GM18951 (cell line): ENCODE measurements at regions of chr9 and their contacts with region 1.

Region 1: GRCh38 chr9:21789541-21790037 is 12.8 kb upstream of the MTAP start:
- POLR2A ChIP-seq: no peak

Region 2: DNA sequence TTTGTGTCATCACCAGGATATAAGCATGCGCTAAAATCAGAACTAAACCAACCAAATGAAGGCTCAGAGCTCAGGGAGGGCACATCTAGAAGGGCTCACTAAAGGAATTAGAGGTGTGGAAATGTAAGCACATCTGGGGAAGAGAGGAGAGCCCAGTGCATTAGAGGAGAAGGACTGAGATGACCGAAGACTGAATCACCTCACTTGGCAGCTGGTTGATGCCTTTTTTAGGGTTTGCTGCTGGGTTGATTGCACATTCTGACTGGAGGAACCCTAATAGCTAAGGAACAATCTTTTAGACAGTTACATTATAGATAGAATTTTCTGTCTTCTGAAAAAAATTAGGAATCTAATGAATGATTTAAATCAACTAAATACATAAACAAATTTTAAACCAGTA is 614.9 kb before region 1 on chr9:
- in situ Hi-C with region 1: loop called (anchors 25 kb)
- POLR2A ChIP-seq: no peak

Region 3: GRCh38 chr9:21317956-21318923 is 471.3 kb before region 1 on chr9:
- in situ Hi-C with region 1: loop called (anchors 25 kb)
- POLR2A ChIP-seq: no peak

Region 4: DNA sequence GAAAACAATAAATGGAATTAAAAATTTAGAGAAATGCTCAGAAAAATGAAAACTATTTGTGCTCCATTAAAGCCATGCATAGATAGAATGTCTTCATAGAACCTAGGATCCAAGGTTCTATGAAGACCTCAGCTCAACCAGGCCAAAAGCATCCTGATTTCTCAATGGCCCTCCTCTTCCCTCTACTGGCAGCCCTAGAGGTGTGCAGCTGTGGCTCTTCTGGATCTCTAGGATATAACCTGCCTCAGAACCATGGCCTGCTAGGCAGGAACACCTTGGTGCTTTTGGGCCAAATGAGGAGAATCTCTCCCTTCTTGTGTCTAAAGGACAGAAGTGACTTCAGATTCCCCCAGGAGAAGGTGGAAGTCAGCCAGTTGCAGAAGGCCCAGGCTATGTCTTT is 334.3 kb before region 1 on chr9:
- in situ Hi-C with region 1: loop called (anchors 25 kb)
- POLR2A ChIP-seq: no peak